ENCODE measurements at regions of chr12 and their contacts with region 1.

Region 1: GRCh38 chr12:12606781-12607589 is 4.7 kb upstream of the CREBL2 start:
- DNase-seq: no peak
- ATAC-seq: no peak
- H3K4me3 ChIP-seq: no peak overlapping the region
- H3K27ac ChIP-seq: no peak overlapping the region
- H3K4me1 ChIP-seq: peaks cover 4% of the 10 kb centered on the region; the same call in 1 of the 2 replicates
- H3K27me3 ChIP-seq: no peaks in the 10 kb centered on the region
- CTCF ChIP-seq: no peak

Region 2: GRCh38 chr12:12686925-12687324 is 79.9 kb after region 1 on chr12:
- CTCF ChIA-PET with region 1: no interaction called
- POLR2A ChIA-PET with region 1: interaction called, 12 read pairs
- in situ Hi-C with region 1: no loop called
- intact Hi-C with region 1: no loop called
- DNase-seq: no peak
- ATAC-seq: no peak
- H3K4me3 ChIP-seq: no peak overlapping the region
- H3K27ac ChIP-seq: no peak overlapping the region
- H3K4me1 ChIP-seq: no peaks in the 10 kb centered on the region
- H3K27me3 ChIP-seq: no peaks in the 10 kb centered on the region
- CTCF ChIP-seq: no peak

Measured in Panc1 (cell line).